Stomach (tissue), 19 donors: ENCODE measurements at regions of chr7 and their contacts with region 1.

Region 1: DNA sequence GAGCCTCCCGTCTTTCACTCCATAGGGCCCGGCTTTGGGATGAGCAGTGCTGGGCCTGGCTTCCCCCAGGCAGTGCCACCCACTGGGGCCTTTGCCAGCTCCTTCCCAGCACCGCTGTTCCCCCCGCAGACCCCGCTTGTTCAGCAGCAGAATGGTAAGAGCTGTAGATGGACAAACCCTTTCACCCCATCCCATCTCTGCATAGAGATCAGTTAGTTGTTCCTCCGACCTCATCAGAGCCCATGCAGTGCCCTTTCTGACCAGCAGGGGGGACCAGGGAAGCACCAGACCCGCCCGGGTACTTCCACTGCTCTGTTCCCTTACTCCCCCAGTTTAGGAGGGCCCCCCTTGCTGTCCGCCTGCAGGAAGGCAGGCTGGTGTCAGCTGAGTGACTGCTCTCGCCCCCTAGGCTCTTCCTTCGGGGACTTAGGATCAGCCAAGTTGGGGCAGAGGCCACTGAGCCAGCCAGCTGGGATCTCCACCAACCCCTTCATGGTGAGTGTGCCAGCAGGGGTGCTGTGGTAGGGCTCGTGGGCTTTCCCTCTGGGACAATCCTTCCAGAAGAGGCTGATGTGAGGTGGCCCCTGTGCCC is 9.8 kb downstream of the SAP25 start:
- DNase-seq: peak; percentile 87 to 89
- H3K4me3 ChIP-seq: no peak overlapping the region
- H3K27ac ChIP-seq: no peak overlapping the region
- H3K4me1 ChIP-seq: peaks cover 4 to 35% (median 29%) of the 10 kb centered on the region in 4 donors
- H3K27me3 ChIP-seq: no peaks in the 10 kb centered on the region
- CTCF ChIP-seq: peak in 6 of 7 experiments; percentile 52 to 99 (median 97)
- EP300 ChIP-seq: no peak
- POLR2A ChIP-seq: no peak

Region 2: GRCh38 chr7:100469227-100470044 is 94.5 kb before region 1 on chr7:
- intact Hi-C with region 1: loop called (anchors 5 kb)
- DNase-seq: peak; percentile 93 to 94
- H3K4me3 ChIP-seq: no peak overlapping the region
- H3K27ac ChIP-seq: peak overlapping the region; percentile 37 to 75 (median 53)
- H3K4me1 ChIP-seq: peaks cover 39 to 82% (median 63%) of the 10 kb centered on the region in 4 donors
- H3K27me3 ChIP-seq: no peaks in the 10 kb centered on the region
- CTCF ChIP-seq: peak in 6 of 7 experiments; percentile 95 to 97 (median 96)
- EP300 ChIP-seq: no peak
- POLR2A ChIP-seq: no peak

Region 3: GRCh38 chr7:100812741-100813478 is 249.0 kb after region 1 on chr7:
- intact Hi-C with region 1: no loop called
- DNase-seq: no peak
- H3K4me3 ChIP-seq: no peak overlapping the region
- H3K27ac ChIP-seq: no peak overlapping the region
- H3K4me1 ChIP-seq: peaks cover 0 to 6% (median 0%) of the 10 kb centered on the region in 4 donors
- H3K27me3 ChIP-seq: no peaks in the 10 kb centered on the region
- CTCF ChIP-seq: no peak
- EP300 ChIP-seq: no peak
- POLR2A ChIP-seq: no peak